Mucosa of descending colon (tissue), 3 donors: ENCODE measurements at regions of chr4 and their contacts with region 1.

Region 1: GRCh38 chr4:170259631-170260153 is 169.9 kb upstream of the AADAT start:
- DNase-seq: peak in 2 of 3 donors; percentile 64 to 95
- ATAC-seq: peak; percentile 100
- H3K4me3 ChIP-seq: no peak overlapping the region
- H3K4me1 ChIP-seq: no peaks in the 10 kb centered on the region
- CTCF ChIP-seq: peak; percentile 62

Region 2: DNA sequence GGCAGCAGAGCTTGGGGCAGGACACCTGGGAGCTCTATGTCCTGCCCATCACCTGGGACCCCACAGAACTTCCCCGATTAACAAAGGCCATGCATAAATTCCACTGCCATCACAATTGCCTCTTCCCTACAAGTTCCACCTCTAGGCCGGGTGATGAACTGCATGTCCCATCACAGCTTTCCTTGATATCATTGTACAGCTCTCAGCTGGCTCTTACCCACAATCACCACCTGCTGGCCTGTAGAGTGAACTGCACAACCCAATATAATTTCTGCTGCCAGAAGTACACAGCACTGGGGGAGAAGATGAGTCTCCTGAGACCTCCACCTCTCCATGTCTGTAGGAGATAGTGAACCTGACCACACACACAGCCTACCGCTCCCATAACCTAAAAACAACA is 115.1 kb after region 1 on chr4:
- intact Hi-C with region 1: loop called in 1 of 2 experiments (anchors 10 kb)
- DNase-seq: peak in 2 of 3 donors; percentile 33 to 47
- ATAC-seq: peak; percentile 99
- H3K4me3 ChIP-seq: no peak overlapping the region
- H3K4me1 ChIP-seq: no peaks in the 10 kb centered on the region
- CTCF ChIP-seq: peak; percentile 36